Adrenal gland (tissue), 19 donors: ENCODE measurements at regions of chr17 and their contacts with region 1.

Region 1: DNA sequence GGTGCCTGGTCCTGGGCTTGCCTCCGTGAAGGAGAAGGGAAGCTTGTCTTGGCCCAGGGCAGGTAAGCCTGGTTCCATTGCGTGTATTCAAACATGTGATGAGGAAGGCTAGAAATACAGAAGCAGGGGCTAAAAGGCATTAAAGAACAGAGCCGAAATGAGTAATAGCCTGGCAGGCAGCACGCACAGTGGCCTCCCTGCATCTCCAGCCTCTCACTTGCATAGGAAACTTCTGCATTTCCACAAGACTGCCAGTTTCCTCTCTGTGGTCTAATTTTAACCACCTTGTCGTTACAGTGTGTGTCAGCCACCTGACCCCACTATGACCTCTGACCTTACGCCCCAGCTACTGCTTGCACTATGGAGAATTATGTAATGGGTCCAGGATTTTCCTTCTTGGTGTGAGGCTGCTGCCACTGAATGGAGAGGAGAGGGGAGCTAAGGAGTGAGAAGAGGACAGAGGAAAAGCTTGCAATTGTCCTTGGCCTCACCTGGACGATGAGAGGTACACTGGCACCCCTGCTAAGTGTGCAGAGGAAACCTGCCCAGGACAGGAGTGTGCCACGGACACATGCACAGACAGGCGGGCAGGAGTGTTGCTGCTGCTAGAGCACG is 32.8 kb downstream of the HIC1 start:
- DNase-seq: peak in 6 of 7 donors; percentile 66 to 88 (median 72)
- H3K4me3 ChIP-seq: no peak overlapping the region
- H3K27ac ChIP-seq: peak overlapping the region in 4 of 5 donors; percentile 45 to 97 (median 74)
- H3K4me1 ChIP-seq: peaks cover 42 to 80% of the 10 kb centered on the region in 2 donors
- H3K27me3 ChIP-seq: no peaks in the 10 kb centered on the region
- CTCF ChIP-seq: no peak
- POLR2A ChIP-seq: no peak

Region 2: DNA sequence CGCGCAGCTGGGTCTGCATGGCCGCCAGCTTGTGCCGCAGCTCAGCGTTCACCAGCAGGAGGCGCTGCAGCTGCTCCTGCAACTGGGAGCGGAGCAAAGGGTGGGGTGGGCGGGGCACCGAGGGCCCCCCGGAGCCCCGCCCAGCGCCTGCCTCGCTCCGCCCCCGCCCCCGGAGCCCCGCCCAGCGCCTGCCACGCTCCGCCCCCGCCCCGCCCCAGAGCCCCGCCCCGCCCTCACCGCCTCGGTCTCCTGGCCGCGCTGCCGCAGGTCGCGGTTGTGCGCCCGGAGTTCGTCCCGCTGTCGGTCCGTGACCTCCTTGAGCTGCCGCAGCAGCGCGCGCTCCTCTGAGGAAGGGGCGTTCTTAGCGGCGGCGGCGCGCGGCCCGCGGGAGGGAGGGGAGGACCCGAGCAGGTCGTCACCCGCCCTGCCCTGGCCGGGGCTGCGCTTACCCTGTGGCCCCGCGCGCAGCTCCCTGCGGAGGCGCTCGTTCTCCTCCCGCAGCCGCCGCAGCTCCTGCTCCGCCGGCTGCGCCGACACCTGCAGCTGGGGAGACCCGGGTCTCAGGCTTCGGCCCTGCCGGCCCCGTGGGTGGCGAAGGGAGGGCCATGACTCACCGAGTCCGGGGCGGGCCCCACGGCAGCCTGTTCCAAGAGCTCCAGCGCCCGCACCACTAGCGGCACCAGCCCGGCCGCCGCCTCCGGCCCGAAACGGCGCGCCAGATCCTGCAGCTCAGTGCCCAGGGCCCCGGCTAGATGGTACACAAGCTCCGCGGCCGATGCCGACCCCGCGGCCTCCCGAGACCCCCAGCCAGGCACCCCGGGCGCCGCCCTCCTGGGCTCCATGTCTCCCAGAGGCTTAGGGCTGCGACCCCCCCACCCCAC is 438.5 kb before region 1 on chr17:
- intact Hi-C with region 1: no loop called
- DNase-seq: peak; percentile 90 to 98 (median 96)
- H3K4me3 ChIP-seq: peak overlapping the region in 3 of 4 donors; percentile 60 to 71 (median 70)
- H3K27ac ChIP-seq: peak overlapping the region; percentile 87 to 98 (median 96)
- H3K4me1 ChIP-seq: peaks cover 21 to 40% of the 10 kb centered on the region in 2 donors
- H3K27me3 ChIP-seq: no peaks in the 10 kb centered on the region
- CTCF ChIP-seq: peak in 2 of 6 experiments; percentile 15 to 88
- POLR2A ChIP-seq: peak; percentile 24 to 86

Region 3: DNA sequence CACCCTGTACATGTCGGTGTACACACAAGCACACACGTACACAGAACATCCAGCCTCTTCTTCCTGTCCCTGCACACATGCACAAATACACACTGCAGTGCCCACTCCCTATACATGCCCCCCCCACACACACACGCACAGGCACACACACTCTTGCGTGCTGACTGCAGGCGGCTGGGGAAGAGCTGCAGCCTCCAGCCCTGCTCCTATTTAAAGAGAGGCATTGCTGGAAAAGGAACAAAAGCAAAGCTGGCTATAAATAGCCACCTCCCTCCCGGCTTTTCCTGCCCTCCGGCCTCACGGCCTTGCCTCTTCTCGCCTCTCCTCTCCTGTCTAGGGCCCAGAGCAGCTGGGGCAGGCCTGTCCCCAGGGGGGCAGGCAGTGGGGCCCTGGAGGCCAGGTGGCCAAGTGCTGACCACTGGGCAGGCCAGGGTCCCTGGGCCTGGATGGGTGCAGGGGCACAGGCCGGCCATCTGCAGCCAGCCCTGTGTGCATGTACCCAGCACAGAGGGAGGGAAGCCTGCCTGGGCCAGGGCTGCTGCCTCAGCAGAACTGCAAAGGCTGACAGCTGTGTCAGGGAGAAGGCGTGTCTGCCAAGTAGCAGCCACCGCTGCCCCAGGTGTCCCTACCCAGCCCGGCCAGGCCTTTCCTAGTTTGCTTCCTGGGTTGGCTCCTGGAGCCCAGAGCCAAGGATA is 88.0 kb before region 1 on chr17:
- intact Hi-C with region 1: no loop called
- DNase-seq: peak; percentile 65 to 86 (median 73)
- H3K4me3 ChIP-seq: peak overlapping the region in 1 of 4 donors; percentile 23
- H3K27ac ChIP-seq: peak overlapping the region; percentile 2 to 94 (median 85)
- H3K4me1 ChIP-seq: peaks cover 47 to 53% of the 10 kb centered on the region in 2 donors
- H3K27me3 ChIP-seq: no peaks in the 10 kb centered on the region
- CTCF ChIP-seq: no peak
- POLR2A ChIP-seq: peak in 1 of 2 donors; percentile 33

Region 4: GRCh38 chr17:2157675-2158395 is 70.1 kb after region 1 on chr17:
- intact Hi-C with region 1: loop called in 1 of 2 experiments (anchors 2 kb)
- DNase-seq: peak in 3 of 7 donors; percentile 34 to 58 (median 52)
- H3K4me3 ChIP-seq: no peak overlapping the region
- H3K27ac ChIP-seq: peak overlapping the region in 2 of 5 donors; percentile 30 to 57
- H3K4me1 ChIP-seq: peaks cover 13 to 24% of the 10 kb centered on the region in 2 donors
- H3K27me3 ChIP-seq: no peaks in the 10 kb centered on the region
- CTCF ChIP-seq: no peak
- POLR2A ChIP-seq: no peak

Region 5: DNA sequence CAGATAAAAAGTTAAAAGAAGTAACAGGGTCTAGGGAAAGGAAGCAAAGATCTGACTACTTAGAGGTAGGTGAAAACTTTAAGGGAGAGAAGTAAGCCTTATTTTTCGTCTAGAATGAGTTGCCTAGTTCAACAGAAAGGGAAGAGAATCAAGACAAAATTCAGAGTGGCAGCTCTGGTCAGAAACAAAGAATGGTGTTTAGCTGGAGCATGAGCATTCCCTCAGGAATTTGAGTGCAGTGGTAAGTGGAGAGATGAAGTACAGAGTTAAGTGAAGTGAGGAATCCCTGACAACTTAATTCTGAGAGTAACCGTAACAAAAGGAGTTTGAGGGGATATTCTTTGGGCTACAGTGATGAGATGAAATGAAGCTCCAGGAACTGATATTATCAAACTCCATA is 204.4 kb after region 1 on chr17:
- intact Hi-C with region 1: no loop called
- DNase-seq: no peak
- H3K4me3 ChIP-seq: no peak overlapping the region
- H3K27ac ChIP-seq: no peak overlapping the region
- H3K4me1 ChIP-seq: no peaks in the 10 kb centered on the region
- H3K27me3 ChIP-seq: no peaks in the 10 kb centered on the region
- CTCF ChIP-seq: no peak
- POLR2A ChIP-seq: no peak

Region 6: GRCh38 chr17:2688351-2689342 is 600.9 kb after region 1 on chr17:
- intact Hi-C with region 1: no loop called
- DNase-seq: peak in 3 of 7 donors; percentile 52 to 72 (median 54)
- H3K4me3 ChIP-seq: no peak overlapping the region
- H3K27ac ChIP-seq: peak overlapping the region in 3 of 5 donors; percentile 3 to 65 (median 52)
- H3K4me1 ChIP-seq: peaks cover 12 to 27% of the 10 kb centered on the region in 2 donors
- H3K27me3 ChIP-seq: no peaks in the 10 kb centered on the region
- CTCF ChIP-seq: no peak
- POLR2A ChIP-seq: no peak